Caco-2 (cell line): ENCODE measurements at regions of chr4 and their contacts with region 1.

Region 1: GRCh38 chr4:1346781-1347409 is at the start of gene UVSSA:
- DNase-seq: peak; percentile 100
- H3K4me3 ChIP-seq: peak within 1 kb of the TSS; percentile 91
- H3K4me3 Mint-ChIP-seq: peak within 1 kb of the TSS; percentile 85
- H3K27ac Mint-ChIP-seq: peak within 1 kb of the TSS; percentile 83
- H3K4me1 ChIP-seq: 0 out of 2 replicates have a peak, but pooled peaks cover 10% of the 10 kb centered on the region
- H3K4me1 Mint-ChIP-seq: peaks cover 20% of the 10 kb centered on the region
- H3K27me3 ChIP-seq: no peaks in the 10 kb centered on the region
- H3K27me3 Mint-ChIP-seq: no peaks in the 10 kb centered on the region
- CTCF ChIP-seq: no peak
- total RNA-seq, gene UVSSA: 26.3 and 27.4 TPM in 2 replicates

Region 2: GRCh38 chr4:1289207-1290164 is 57.4 kb before region 1 on chr4 and contains the start of gene MAEA:
- CTCF ChIA-PET with region 1: interaction called, 3 read pairs
- POLR2A ChIA-PET with region 1: interaction called, 13 read pairs
- intact Hi-C with region 1: loop called (anchors 1 kb)
- DNase-seq: peak; percentile 96 to 97
- H3K4me3 ChIP-seq: peak within 1 kb of the TSS; percentile 97
- H3K4me3 Mint-ChIP-seq: peak within 1 kb of the TSS; percentile 96
- H3K27ac Mint-ChIP-seq: peak within 1 kb of the TSS; percentile 95
- H3K4me1 ChIP-seq: peaks cover 16% of the 10 kb centered on the region
- H3K4me1 Mint-ChIP-seq: no peaks in the 10 kb centered on the region
- H3K27me3 ChIP-seq: no peaks in the 10 kb centered on the region
- H3K27me3 Mint-ChIP-seq: no peaks in the 10 kb centered on the region
- CTCF ChIP-seq: no peak
- total RNA-seq, gene MAEA: 81.1 and 89.3 TPM in 2 replicates

Region 3: GRCh38 chr4:1644891-1645657 is 298.2 kb after region 1 on chr4:
- CTCF ChIA-PET with region 1: no interaction called
- POLR2A ChIA-PET with region 1: no interaction called
- intact Hi-C with region 1: no loop called
- DNase-seq: no peak
- H3K4me3 ChIP-seq: no peak overlapping the region
- H3K4me3 Mint-ChIP-seq: no peak overlapping the region
- H3K27ac Mint-ChIP-seq: no peak overlapping the region
- H3K4me1 ChIP-seq: no peaks in the 10 kb centered on the region
- H3K4me1 Mint-ChIP-seq: no peaks in the 10 kb centered on the region
- H3K27me3 ChIP-seq: no peaks in the 10 kb centered on the region
- H3K27me3 Mint-ChIP-seq: no peaks in the 10 kb centered on the region
- CTCF ChIP-seq: no peak